ENCODE measurements at regions of chr4 and their contacts with region 1.

Region 1: GRCh38 chr4:107719922-107720722 is at the start of gene PAPSS1:
- DNase-seq: peak; percentile 96
- H3K4me3 Mint-ChIP-seq: peak within 1 kb of the TSS; percentile 88
- H3K27ac Mint-ChIP-seq: peak within 1 kb of the TSS; percentile 84
- H3K4me1 Mint-ChIP-seq: peaks cover 26% of the 10 kb centered on the region
- H3K27me3 Mint-ChIP-seq: no peaks in the 10 kb centered on the region
- total RNA-seq, gene PAPSS1: 33.0 to 34.9 TPM

Region 2: GRCh38 chr4:106315968-106316772 is 1404.0 kb before region 1 on chr4 and contains the starts of genes AIMP1 and TBCK:
- CTCF ChIA-PET with region 1: no interaction called
- POLR2A ChIA-PET with region 1: no interaction called
- intact Hi-C with region 1: loop called (anchors 1 kb)
- DNase-seq: peak; percentile 92
- H3K4me3 Mint-ChIP-seq: no peak within 1 kb of the TSS
- H3K27ac Mint-ChIP-seq: no peak within 1 kb of the TSS
- H3K4me1 Mint-ChIP-seq: peaks cover 44% of the 10 kb centered on the region
- H3K27me3 Mint-ChIP-seq: no peaks in the 10 kb centered on the region
- total RNA-seq, gene AIMP1: 59.2 to 60.1 TPM
- total RNA-seq, gene TBCK: 20.2 to 22.0 TPM

Region 3: DNA sequence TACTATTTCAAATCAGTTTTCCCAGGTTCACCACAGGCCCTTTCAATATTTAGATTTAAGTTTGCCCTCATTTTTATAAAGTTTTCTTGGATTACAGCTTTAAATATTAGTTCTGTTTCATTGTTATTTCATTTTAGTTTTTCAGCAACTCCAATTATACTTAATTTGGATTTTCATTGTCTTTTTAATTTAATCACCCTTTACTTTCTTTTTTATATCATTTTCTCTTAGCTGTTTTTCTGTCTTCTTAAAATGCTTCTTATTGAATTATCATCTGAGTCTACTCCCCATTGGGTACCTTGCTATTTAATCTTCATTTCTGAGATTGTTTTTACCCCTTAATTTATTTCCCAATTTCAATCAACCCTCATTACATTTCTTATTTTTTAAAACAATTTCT is 160.5 kb before region 1 on chr4:
- CTCF ChIA-PET with region 1: interaction called, 3 read pairs
- POLR2A ChIA-PET with region 1: no interaction called
- intact Hi-C with region 1: loop called (anchors 5 kb)
- DNase-seq: no peak
- H3K4me3 Mint-ChIP-seq: no peak overlapping the region
- H3K27ac Mint-ChIP-seq: no peak overlapping the region
- H3K4me1 Mint-ChIP-seq: no peaks in the 10 kb centered on the region
- H3K27me3 Mint-ChIP-seq: peaks cover 6% of the 10 kb centered on the region

Region 4: DNA sequence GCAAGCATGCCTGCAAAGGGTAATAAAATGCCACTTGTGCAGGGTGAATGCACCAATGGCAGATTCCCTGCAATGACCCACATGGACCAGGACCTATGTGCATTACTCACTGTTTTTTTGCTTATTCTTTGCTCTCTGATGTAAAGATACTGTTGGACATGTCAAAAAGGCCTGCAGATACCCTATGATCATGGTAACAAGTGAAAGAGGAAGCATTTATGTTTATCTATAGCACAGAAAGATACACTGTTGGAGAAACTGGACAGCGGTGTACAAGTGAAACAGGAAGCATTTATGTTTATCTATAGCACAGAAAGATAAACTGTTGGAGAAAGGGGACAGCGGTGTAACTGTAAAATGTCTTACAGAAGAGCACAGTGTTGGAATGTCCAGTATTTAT is 127.6 kb before region 1 on chr4:
- CTCF ChIA-PET with region 1: no interaction called
- POLR2A ChIA-PET with region 1: no interaction called
- intact Hi-C with region 1: no loop called
- DNase-seq: no peak
- H3K4me3 Mint-ChIP-seq: no peak overlapping the region
- H3K27ac Mint-ChIP-seq: no peak overlapping the region
- H3K4me1 Mint-ChIP-seq: no peaks in the 10 kb centered on the region
- H3K27me3 Mint-ChIP-seq: peaks cover 5% of the 10 kb centered on the region

Region 5: DNA sequence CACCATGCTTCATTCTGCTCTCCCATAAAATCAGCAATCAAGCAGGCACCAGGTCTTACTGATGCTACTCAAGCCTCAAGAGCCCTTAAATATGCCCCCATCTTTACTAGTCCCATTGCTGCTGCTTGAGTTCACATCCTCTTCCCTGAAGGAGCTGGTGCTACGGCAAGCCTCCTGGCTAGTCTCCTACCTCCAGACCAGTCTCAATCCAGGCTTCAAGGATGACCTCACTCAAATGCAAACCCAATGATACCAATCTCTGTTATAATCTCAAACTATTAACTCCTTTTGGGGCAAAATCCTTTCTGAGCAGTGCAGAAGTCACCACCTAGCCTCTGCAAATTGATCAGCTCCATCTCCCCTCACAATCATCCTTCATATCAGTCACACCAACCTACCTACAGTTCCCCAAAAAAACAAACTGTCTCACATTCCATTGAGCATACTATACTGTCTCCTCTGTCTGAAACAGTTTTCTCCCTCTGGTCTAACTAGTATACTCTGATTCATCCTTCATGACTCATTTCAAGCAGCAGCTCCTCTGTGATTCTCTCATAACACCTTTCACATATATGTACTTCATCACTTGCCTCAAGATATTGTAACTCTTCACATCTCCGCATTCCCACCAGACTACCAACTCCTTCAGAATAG is 30.1 kb before region 1 on chr4:
- CTCF ChIA-PET with region 1: no interaction called
- POLR2A ChIA-PET with region 1: no interaction called
- intact Hi-C with region 1: loop called (anchors 2 kb)
- DNase-seq: no peak
- H3K4me3 Mint-ChIP-seq: no peak overlapping the region
- H3K27ac Mint-ChIP-seq: no peak overlapping the region
- H3K4me1 Mint-ChIP-seq: peaks cover 18% of the 10 kb centered on the region
- H3K27me3 Mint-ChIP-seq: no peaks in the 10 kb centered on the region

Region 6: GRCh38 chr4:107736924-107737448 is 16.9 kb after region 1 on chr4:
- CTCF ChIA-PET with region 1: interaction called, 31 read pairs
- POLR2A ChIA-PET with region 1: no interaction called
- intact Hi-C with region 1: no loop called
- DNase-seq: peak; percentile 40
- H3K4me3 Mint-ChIP-seq: no peak overlapping the region
- H3K27ac Mint-ChIP-seq: no peak overlapping the region
- H3K4me1 Mint-ChIP-seq: no peaks in the 10 kb centered on the region
- H3K27me3 Mint-ChIP-seq: no peaks in the 10 kb centered on the region

Region 7: GRCh38 chr4:107863850-107864371 is 143.8 kb after region 1 on chr4:
- CTCF ChIA-PET with region 1: no interaction called
- POLR2A ChIA-PET with region 1: no interaction called
- intact Hi-C with region 1: loop called (anchors 1 kb)
- DNase-seq: peak; percentile 60
- H3K4me3 Mint-ChIP-seq: no peak overlapping the region
- H3K27ac Mint-ChIP-seq: peak overlapping the region; percentile 28
- H3K4me1 Mint-ChIP-seq: peaks cover 21% of the 10 kb centered on the region
- H3K27me3 Mint-ChIP-seq: peaks cover 9% of the 10 kb centered on the region

Region 8: GRCh38 chr4:107989537-107990386 is 269.6 kb after region 1 on chr4 and contains the start of gene HADH:
- CTCF ChIA-PET with region 1: no interaction called
- POLR2A ChIA-PET with region 1: no interaction called
- intact Hi-C with region 1: loop called (anchors 1 kb)
- DNase-seq: peak; percentile 95
- H3K4me3 Mint-ChIP-seq: peak within 1 kb of the TSS; percentile 85
- H3K27ac Mint-ChIP-seq: peak within 1 kb of the TSS; percentile 76
- H3K4me1 Mint-ChIP-seq: peaks cover 36% of the 10 kb centered on the region
- H3K27me3 Mint-ChIP-seq: no peaks in the 10 kb centered on the region
- total RNA-seq, gene HADH: 49.0 to 50.6 TPM

Measured in activated CD4-positive, alpha-beta memory T cell treated with anti-CD3 and anti-CD28 coated beads for 36 hours (primary cell).